Activated CD4-positive, alpha-beta T cell treated with anti-CD3 and anti-CD28 coated beads for 36 hours (primary cell): ENCODE measurements at regions of chr7 and their contacts with region 1.

Region 1: GRCh38 chr7:106041140-106041717 is 70.9 kb downstream of the SYPL1 start:
- DNase-seq: peak; percentile 59
- ATAC-seq: peak; percentile 42
- H3K4me3 Mint-ChIP-seq: no peak overlapping the region
- H3K27ac Mint-ChIP-seq: no peak overlapping the region
- H3K4me1 Mint-ChIP-seq: peaks cover 31% of the 10 kb centered on the region
- H3K27me3 Mint-ChIP-seq: no peaks in the 10 kb centered on the region

Region 2: DNA sequence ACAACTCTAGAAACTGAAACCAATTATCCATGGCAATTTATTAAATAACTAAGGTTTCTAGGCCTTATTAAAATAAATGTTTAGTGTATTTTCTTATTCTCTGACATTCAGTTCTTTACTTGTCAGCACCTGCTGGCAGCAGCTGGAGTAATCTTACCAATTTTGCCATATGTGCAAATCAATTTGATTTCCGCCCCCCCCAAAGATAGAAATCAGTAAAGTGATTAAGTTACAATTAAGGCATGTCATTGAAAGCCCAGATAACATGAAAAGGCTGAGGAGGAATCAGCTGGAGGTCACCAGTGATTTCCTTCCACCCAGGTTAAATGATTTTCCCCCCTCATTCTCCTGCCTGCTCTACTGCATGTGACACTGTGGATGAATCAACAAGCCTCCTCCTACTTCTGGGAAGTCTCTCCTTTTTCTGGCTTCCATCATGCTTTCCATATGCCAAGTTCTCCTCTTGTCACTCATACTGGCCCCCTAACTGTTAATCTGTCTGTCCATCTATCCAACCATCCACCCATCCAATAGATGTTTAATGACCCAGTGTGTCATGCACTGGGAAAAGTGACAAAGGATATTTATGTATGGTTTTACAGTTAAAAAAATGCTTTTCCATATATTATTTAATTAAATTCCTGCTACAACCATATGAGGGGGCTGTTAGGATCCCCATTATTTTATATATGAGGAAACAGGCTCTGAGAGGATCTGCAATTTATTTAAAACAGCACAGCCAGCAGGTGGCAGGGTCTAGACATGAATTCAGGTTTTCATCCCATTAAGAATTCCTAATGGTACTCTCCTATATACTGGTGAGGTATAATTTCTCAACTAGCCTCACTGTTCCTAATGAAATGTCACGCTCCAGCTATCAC is 281.3 kb before region 1 on chr7:
- CTCF ChIA-PET with region 1: interaction called, 31 read pairs
- POLR2A ChIA-PET with region 1: no interaction called
- intact Hi-C with region 1: loop called (anchors 1 kb)
- DNase-seq: peak; percentile 47
- ATAC-seq: peak; percentile 20
- H3K4me3 Mint-ChIP-seq: no peak overlapping the region
- H3K27ac Mint-ChIP-seq: no peak overlapping the region
- H3K4me1 Mint-ChIP-seq: peaks cover 28% of the 10 kb centered on the region
- H3K27me3 Mint-ChIP-seq: no peaks in the 10 kb centered on the region

Region 3: DNA sequence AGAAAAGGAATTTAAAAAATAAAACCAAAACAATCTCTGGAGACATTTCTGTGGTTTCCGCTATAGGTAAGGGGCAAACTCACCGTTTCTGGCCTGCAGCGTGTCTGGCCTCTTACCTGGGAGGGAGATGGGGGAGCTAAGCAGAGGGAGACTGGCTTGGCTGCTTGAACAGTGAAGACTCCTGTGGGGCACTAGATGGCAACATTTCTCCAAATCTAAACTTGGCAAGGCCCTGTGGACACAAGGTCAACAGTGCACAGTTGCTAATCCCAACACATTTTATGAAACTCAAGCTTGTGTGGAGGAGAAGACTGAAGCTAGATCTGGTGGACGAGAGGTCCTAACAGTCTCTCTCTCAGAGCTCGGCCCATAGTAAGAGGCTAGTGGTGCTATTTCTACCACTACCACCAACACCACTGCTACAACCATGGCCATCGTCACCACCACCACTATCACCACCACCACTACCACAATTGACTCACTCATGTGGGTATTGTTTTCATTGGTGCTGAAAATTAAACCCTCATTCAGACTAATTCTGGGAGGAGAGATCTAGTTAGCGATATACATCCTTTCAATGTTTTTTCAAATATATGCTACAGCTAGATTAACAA is 106.5 kb before region 1 on chr7:
- CTCF ChIA-PET with region 1: interaction called, 6 read pairs
- POLR2A ChIA-PET with region 1: no interaction called
- intact Hi-C with region 1: loop called in 1 of 2 experiments (anchors 1 kb)
- DNase-seq: no peak
- ATAC-seq: no peak
- H3K4me3 Mint-ChIP-seq: no peak overlapping the region
- H3K27ac Mint-ChIP-seq: no peak overlapping the region
- H3K4me1 Mint-ChIP-seq: peaks cover 5% of the 10 kb centered on the region
- H3K27me3 Mint-ChIP-seq: no peaks in the 10 kb centered on the region

Region 4: DNA sequence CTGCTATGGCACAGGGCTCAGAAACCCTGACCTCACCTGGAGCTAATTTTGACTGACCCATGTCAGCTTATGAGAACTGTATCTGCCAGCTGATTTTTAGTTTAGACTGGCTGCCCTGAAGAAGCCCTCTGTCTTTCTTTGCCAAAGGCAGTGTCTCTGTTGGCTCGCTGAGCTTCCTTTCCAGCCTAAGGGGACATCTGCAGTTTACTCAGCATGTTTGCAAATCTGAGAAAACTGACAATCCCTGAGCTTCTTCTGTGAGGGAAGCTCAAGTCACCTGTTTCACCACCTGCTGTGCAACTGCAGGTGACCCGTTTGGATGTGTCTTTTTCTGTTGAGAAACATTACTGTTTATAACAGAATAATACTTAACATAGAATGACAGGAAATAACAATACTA is 1049.2 kb after region 1 on chr7:
- CTCF ChIA-PET with region 1: no interaction called
- POLR2A ChIA-PET with region 1: no interaction called
- intact Hi-C with region 1: no loop called
- DNase-seq: no peak
- ATAC-seq: no peak
- H3K4me3 Mint-ChIP-seq: no peak overlapping the region
- H3K27ac Mint-ChIP-seq: no peak overlapping the region
- H3K4me1 Mint-ChIP-seq: no peaks in the 10 kb centered on the region
- H3K27me3 Mint-ChIP-seq: no peaks in the 10 kb centered on the region